Activated CD8-positive, alpha-beta T cell treated with anti-CD3 and anti-CD28 coated beads, Interleukin-2, amount 10 ng/mL, durations not matched to agents 7 days and 5 days (primary cell): ENCODE measurements at regions of chr2 and their contacts with region 1.

Region 1: GRCh38 chr2:174615871-174616436 is 18.4 kb upstream of the WIPF1 start:
- DNase-seq: no peak
- ATAC-seq: peak; percentile 45
- H3K4me3 Mint-ChIP-seq: peak overlapping the region; percentile 19
- H3K27ac Mint-ChIP-seq: peak overlapping the region; percentile 82
- H3K4me1 Mint-ChIP-seq: peaks cover 87% of the 10 kb centered on the region
- H3K27me3 Mint-ChIP-seq: no peaks in the 10 kb centered on the region

Region 2: GRCh38 chr2:173997269-173997668 is 618.7 kb before region 1 on chr2:
- CTCF ChIA-PET with region 1: no interaction called
- POLR2A ChIA-PET with region 1: no interaction called
- DNase-seq: no peak
- ATAC-seq: no peak
- H3K4me3 Mint-ChIP-seq: no peak overlapping the region
- H3K27ac Mint-ChIP-seq: no peak overlapping the region
- H3K4me1 Mint-ChIP-seq: no peaks in the 10 kb centered on the region
- H3K27me3 Mint-ChIP-seq: peaks cover 22% of the 10 kb centered on the region

Region 3: DNA sequence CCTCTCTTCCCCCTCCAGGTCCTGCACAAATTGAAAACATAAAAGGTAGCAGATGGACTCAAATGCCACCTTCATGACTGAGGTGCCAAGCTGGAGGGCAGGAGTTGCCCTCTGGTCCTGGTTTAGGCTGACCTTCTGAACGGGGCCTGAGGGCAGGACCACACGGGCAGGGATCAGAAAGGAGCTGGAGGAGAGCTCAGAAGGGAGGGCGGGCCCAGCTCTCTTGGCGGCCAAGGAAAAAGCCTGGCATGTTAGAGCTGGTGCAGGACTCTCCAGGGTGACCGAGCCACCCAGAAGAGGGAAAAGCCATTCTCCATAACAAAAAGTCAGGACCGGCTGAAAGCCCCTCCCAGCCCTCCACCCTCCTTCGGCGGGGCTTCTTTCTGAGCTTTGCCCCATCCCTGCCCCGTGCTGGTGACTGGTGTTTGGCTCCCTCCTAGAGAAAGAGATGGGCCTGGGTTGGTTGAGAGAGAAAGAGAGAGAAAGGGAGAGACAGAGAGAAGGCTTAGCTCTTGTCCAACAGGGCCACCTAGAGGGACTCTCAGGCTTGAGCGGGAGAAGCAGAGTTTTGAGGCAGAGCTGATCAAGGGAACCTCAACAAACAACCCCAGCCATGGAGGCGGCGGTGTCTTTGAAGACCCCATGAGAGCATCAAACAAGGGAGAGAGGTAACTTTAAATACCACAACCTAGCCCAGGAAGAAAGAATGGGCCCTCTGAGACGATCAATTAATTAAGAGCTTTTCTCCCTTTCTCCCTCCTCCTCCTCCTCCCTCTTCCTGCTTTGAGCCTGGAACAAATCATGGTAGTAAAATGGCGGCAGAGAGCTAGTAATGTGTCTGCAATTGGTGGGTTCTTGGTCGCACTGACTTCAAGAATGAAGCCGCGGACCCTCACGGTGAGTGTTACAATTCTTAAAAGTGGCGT is 69.1 kb before region 1 on chr2:
- CTCF ChIA-PET with region 1: no interaction called
- POLR2A ChIA-PET with region 1: no interaction called
- DNase-seq: peak; percentile 66
- ATAC-seq: peak; percentile 87
- H3K4me3 Mint-ChIP-seq: no peak overlapping the region
- H3K27ac Mint-ChIP-seq: peak overlapping the region; percentile 32
- H3K4me1 Mint-ChIP-seq: peaks cover 13% of the 10 kb centered on the region
- H3K27me3 Mint-ChIP-seq: peaks cover 3% of the 10 kb centered on the region

Region 4: DNA sequence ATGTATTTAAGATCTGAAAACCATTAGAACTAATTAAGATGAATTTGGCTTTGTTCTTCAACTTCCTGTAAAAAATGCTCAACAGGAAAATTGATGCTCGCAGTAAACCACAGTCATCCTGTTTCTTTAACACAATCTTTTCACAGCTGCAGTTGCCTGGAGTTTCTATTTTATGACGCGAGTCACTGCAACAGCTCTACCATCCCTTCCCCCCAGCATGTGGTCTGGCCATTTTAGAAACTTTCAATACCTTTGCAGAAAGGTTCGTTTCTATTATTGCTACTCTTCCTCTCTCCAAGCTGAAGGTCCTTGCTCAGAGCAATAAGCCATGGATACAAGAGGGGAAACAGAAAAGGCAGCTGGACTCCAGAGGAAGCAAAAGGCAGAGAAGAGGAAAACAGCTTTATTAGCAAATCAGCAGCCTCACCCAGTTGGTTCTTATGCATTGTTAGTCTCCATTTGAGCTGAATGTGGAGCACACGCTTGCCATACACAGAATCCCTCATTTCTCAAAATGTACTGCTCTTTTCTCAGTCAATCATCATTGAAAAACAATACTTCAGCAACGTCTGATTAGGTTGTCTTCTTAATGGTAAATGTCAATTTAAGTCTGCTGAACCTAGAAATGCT is 22.3 kb before region 1 on chr2:
- CTCF ChIA-PET with region 1: interaction called, 141 read pairs
- POLR2A ChIA-PET with region 1: interaction called, 99 read pairs
- DNase-seq: peak; percentile 89
- ATAC-seq: peak; percentile 73
- H3K4me3 Mint-ChIP-seq: peak overlapping the region; percentile 80
- H3K27ac Mint-ChIP-seq: peak overlapping the region; percentile 97
- H3K4me1 Mint-ChIP-seq: peaks cover 47% of the 10 kb centered on the region
- H3K27me3 Mint-ChIP-seq: no peaks in the 10 kb centered on the region

Region 5: GRCh38 chr2:174603280-174603679 is 12.7 kb before region 1 on chr2:
- CTCF ChIA-PET with region 1: interaction called, 141 read pairs
- POLR2A ChIA-PET with region 1: interaction called, 99 read pairs
- DNase-seq: peak; percentile 68
- ATAC-seq: peak; percentile 54
- H3K4me3 Mint-ChIP-seq: no peak overlapping the region
- H3K27ac Mint-ChIP-seq: no peak overlapping the region
- H3K4me1 Mint-ChIP-seq: peaks cover 88% of the 10 kb centered on the region
- H3K27me3 Mint-ChIP-seq: no peaks in the 10 kb centered on the region